ENCODE measurements at regions of chr7 and their contacts with region 1.

Region 1: GRCh38 chr7:362402-363096 is 72.6 kb downstream of the FOXL3 start:
- DNase-seq: peak; percentile 49 to 61 (median 56)
- H3K4me3 ChIP-seq: peak overlapping the region; percentile 13 to 21
- H3K4me3 Mint-ChIP-seq: peak overlapping the region; percentile 60 to 94 (median 76)
- H3K27ac ChIP-seq: peak overlapping the region; percentile 29
- H3K27ac Mint-ChIP-seq: peak overlapping the region; percentile 68 to 95 (median 85)
- H3K4me1 ChIP-seq: peaks cover 72% of the 10 kb centered on the region
- H3K4me1 Mint-ChIP-seq: peaks cover 40 to 68% (median 62%) of the 10 kb centered on the region in 4 donors
- H3K27me3 ChIP-seq: no peaks in the 10 kb centered on the region
- H3K27me3 Mint-ChIP-seq: no peaks in the 10 kb centered on the region

Region 2: GRCh38 chr7:379456-380138 is 17.0 kb after region 1 on chr7:
- CTCF ChIA-PET with region 1: no interaction called
- POLR2A ChIA-PET with region 1: interaction called, 15 read pairs
- intact Hi-C with region 1: no loop called
- DNase-seq: peak in 1 of 5 donors; percentile 45
- H3K4me3 ChIP-seq: no peak overlapping the region
- H3K4me3 Mint-ChIP-seq: peak overlapping the region in 5 of 8 donors; percentile 43 to 81 (median 74)
- H3K27ac ChIP-seq: no peak overlapping the region
- H3K27ac Mint-ChIP-seq: peak overlapping the region in 3 of 7 donors; percentile 70 to 91 (median 87)
- H3K4me1 ChIP-seq: peaks cover 24% of the 10 kb centered on the region
- H3K4me1 Mint-ChIP-seq: peaks cover 18 to 43% (median 25%) of the 10 kb centered on the region in 4 donors
- H3K27me3 ChIP-seq: no peaks in the 10 kb centered on the region
- H3K27me3 Mint-ChIP-seq: peaks cover 0 to 1% of the 10 kb centered on the region in 2 donors

Region 3: GRCh38 chr7:480531-481218 is 118.1 kb after region 1 on chr7:
- CTCF ChIA-PET with region 1: no interaction called
- POLR2A ChIA-PET with region 1: no interaction called
- intact Hi-C with region 1: no loop called
- DNase-seq: no peak
- H3K4me3 ChIP-seq: no peak overlapping the region
- H3K4me3 Mint-ChIP-seq: no peak overlapping the region
- H3K27ac ChIP-seq: no peak overlapping the region
- H3K27ac Mint-ChIP-seq: no peak overlapping the region
- H3K4me1 ChIP-seq: no peaks in the 10 kb centered on the region
- H3K4me1 Mint-ChIP-seq: no peaks in the 10 kb centered on the region
- H3K27me3 ChIP-seq: no peaks in the 10 kb centered on the region
- H3K27me3 Mint-ChIP-seq: peaks cover 2 to 9% of the 10 kb centered on the region in 2 donors

Measured in CD4-positive, alpha-beta memory T cell (primary cell).